ENCODE measurements at regions of chr15 and their contacts with region 1.

Region 1: DNA sequence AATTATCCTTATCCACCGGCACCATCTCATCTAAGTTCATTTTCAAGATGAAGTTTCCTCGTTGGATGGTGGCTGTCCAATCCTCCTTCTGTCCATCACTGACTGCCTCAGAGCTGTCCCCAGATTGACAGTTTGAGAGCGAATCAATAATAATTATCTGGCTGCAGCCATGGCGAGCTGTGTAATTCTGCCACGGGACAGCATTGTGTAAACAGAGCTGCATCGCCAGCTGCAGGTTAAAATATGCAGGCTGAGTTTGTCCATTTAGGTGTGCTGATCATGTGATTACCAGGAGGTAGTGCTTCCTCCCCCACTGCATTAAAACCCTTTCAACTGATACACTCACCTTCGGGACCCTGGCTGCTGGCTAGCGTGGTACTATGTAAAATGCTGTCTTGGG is 461.9 kb upstream of the ONECUT1 start:
- DNase-seq: no peak
- H3K4me3 ChIP-seq: no peak overlapping the region
- H3K27ac ChIP-seq: no peak overlapping the region
- H3K4me1 ChIP-seq: no peaks in the 10 kb centered on the region
- H3K27me3 ChIP-seq: no peaks in the 10 kb centered on the region

Region 2: GRCh38 chr15:53351373-53351772 is 99.4 kb after region 1 on chr15:
- in situ Hi-C with region 1: loop called (anchors 25 kb)
- DNase-seq: no peak
- H3K4me3 ChIP-seq: no peak overlapping the region
- H3K27ac ChIP-seq: no peak overlapping the region
- H3K4me1 ChIP-seq: no peaks in the 10 kb centered on the region
- H3K27me3 ChIP-seq: no peaks in the 10 kb centered on the region